ENCODE measurements at regions of chr12 and their contacts with region 1.

Region 1: GRCh38 chr12:98424726-98425401 is 90.5 kb upstream of the TMPO start:
- DNase-seq: peak; percentile 85
- H3K4me3 Mint-ChIP-seq: no peak overlapping the region
- H3K27ac Mint-ChIP-seq: no peak overlapping the region
- H3K4me1 Mint-ChIP-seq: peaks cover 2% of the 10 kb centered on the region
- H3K27me3 Mint-ChIP-seq: peaks cover 9% of the 10 kb centered on the region

Region 2: GRCh38 chr12:98274430-98275130 is 150.3 kb before region 1 on chr12:
- intact Hi-C with region 1: no loop called
- DNase-seq: no peak
- H3K4me3 Mint-ChIP-seq: no peak overlapping the region
- H3K27ac Mint-ChIP-seq: no peak overlapping the region
- H3K4me1 Mint-ChIP-seq: no peaks in the 10 kb centered on the region
- H3K27me3 Mint-ChIP-seq: peaks cover 5% of the 10 kb centered on the region

Region 3: GRCh38 chr12:98532681-98533304 is 107.9 kb after region 1 on chr12:
- intact Hi-C with region 1: loop called (anchors 5 kb)
- DNase-seq: peak; percentile 78
- H3K4me3 Mint-ChIP-seq: no peak overlapping the region
- H3K27ac Mint-ChIP-seq: peak overlapping the region; percentile 52
- H3K4me1 Mint-ChIP-seq: peaks cover 22% of the 10 kb centered on the region
- H3K27me3 Mint-ChIP-seq: no peaks in the 10 kb centered on the region